ENCODE measurements at regions of chr9 and their contacts with region 1.

Region 1: GRCh38 chr9:98118640-98119601 is at the start of gene TRIM14:
- DNase-seq: no peak
- ATAC-seq: peak; percentile 78
- H3K4me3 ChIP-seq: peak within 1 kb of the TSS; percentile 77
- H3K27ac ChIP-seq: peak within 1 kb of the TSS; percentile 90
- H3K4me1 ChIP-seq: peaks cover 25% of the 10 kb centered on the region
- H3K27me3 ChIP-seq: no peaks in the 10 kb centered on the region
- CTCF ChIP-seq: peak in 2 of 3 experiments; percentile 28 to 44; a peak in 3 of 6 replicates
- EP300 ChIP-seq: no peak
- POLR2A ChIP-seq: peak; percentile 94
- RAD21 ChIP-seq: peak; percentile 47
- polyA plus RNA-seq, gene TRIM14: 8.6 to 10.2 TPM

Region 2: DNA sequence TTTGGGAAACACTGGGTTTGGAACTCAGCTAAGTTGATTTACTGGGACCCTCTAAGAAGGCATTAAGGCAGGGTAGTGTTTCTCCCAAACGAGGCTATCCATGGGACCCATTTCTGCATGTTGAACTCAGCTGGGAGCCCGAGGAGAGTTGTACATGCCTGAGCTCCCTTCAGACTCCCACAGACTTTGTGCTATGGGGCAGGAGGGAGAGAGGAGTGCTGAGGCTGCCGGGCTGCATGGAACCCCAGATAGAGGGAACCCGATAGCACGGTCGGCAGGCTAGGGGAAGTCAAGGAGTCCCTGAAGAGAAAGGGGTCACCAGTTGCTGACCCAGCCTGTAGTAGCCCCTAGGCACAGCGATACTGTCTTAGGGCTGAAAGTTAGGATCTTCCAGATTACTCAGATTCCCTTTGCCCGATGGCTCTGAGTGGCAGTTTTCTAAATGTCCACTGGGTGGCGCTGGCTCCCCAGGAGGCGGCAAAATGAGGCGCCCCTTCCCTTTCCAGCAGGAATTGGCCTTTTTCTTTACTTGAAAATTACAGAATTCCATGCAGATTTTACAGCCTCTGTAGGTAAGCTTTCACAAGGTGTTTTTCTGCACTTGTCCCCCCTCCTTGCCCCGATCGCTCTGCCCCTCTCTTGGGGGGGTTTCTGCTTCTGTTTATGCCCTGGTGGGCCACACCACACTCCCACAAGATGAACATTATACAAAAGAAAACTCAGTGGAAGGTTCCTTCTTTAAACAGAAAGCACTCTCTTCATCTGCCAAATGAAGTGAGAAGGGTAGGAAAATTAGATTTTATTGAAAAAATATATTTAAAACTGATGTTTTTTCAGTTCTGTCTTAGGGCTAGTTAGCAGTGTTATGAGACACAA is 44.6 kb before region 1 on chr9:
- CTCF ChIA-PET with region 1: interaction called, 18 read pairs
- POLR2A ChIA-PET with region 1: no interaction called
- RAD21 ChIA-PET with region 1: interaction called, 7 read pairs
- SMC1A ChIA-PET with region 1: interaction called, 8 read pairs
- in situ Hi-C with region 1: no loop called
- intact Hi-C with region 1: loop called (anchors 2 kb)
- DNase-seq: no peak
- ATAC-seq: peak; percentile 81
- H3K4me3 ChIP-seq: no peak overlapping the region
- H3K27ac ChIP-seq: no peak overlapping the region
- H3K4me1 ChIP-seq: no peaks in the 10 kb centered on the region
- H3K27me3 ChIP-seq: no peaks in the 10 kb centered on the region
- CTCF ChIP-seq: peak; percentile 85 to 95 (median 94)
- EP300 ChIP-seq: no peak
- POLR2A ChIP-seq: no peak
- RAD21 ChIP-seq: peak; percentile 90

Region 3: DNA sequence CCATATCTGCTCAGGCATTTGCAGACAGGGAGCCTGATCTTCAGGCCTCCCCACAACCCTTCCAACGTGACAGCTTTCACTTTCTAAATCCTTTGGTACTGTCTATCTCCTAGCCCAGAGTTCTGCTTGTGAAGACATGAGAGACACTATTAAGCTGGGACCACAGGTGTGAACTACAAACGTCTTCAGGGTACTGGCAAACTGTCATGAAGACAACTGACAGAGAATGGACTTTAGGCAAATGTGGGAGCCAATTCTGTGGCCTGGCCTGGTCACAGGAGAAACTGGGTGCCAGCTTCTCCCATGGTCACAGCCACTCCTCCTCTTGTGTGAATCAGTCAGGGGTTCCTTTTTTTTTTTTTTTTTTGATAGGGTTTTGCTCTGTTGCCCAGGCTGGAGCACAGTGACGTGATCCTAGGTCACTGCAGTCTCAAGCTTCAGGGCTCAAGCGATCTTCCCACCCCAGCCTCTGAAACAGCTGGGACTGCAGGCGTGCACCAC is 10.3 kb before region 1 on chr9:
- CTCF ChIA-PET with region 1: interaction called, 27 read pairs
- POLR2A ChIA-PET with region 1: interaction called, 17 read pairs
- RAD21 ChIA-PET with region 1: interaction called, 25 read pairs
- SMC1A ChIA-PET with region 1: interaction called, 26 read pairs
- in situ Hi-C with region 1: no loop called
- intact Hi-C with region 1: loop called (anchors 2 kb)
- DNase-seq: peak; percentile 80
- ATAC-seq: peak; percentile 81
- H3K4me3 ChIP-seq: peak overlapping the region; percentile 19; the same call in 1 of the 2 replicates
- H3K27ac ChIP-seq: peak overlapping the region; percentile 91
- H3K4me1 ChIP-seq: peaks cover 62% of the 10 kb centered on the region
- H3K27me3 ChIP-seq: no peaks in the 10 kb centered on the region
- CTCF ChIP-seq: no peak
- EP300 ChIP-seq: peak in 1 of 2 experiments; percentile 23; a peak in 1 of 4 replicates
- POLR2A ChIP-seq: no peak
- RAD21 ChIP-seq: no peak

Region 4: GRCh38 chr9:98192503-98193335 is 73.8 kb after region 1 on chr9 and contains the start of gene CORO2A:
- CTCF ChIA-PET with region 1: interaction called, 5 read pairs
- POLR2A ChIA-PET with region 1: interaction called, 3 read pairs
- RAD21 ChIA-PET with region 1: interaction called, 8 read pairs
- SMC1A ChIA-PET with region 1: interaction called, 4 read pairs
- in situ Hi-C with region 1: no loop called
- intact Hi-C with region 1: loop called (anchors 5 kb)
- DNase-seq: no peak
- ATAC-seq: peak; percentile 87
- H3K4me3 ChIP-seq: peak within 1 kb of the TSS; percentile 78
- H3K27ac ChIP-seq: no peak within 1 kb of the TSS
- H3K4me1 ChIP-seq: peaks cover 6% of the 10 kb centered on the region
- H3K27me3 ChIP-seq: peaks cover 0 to 3% of the 10 kb centered on the region in 2 experiments; a peak in 3 of 4 replicates
- CTCF ChIP-seq: peak; percentile 40 to 43 (median 42)
- EP300 ChIP-seq: no peak
- POLR2A ChIP-seq: peak; percentile 69
- RAD21 ChIP-seq: 0 out of 2 replicates have a peak, but pooled peaks have one; percentile 21
- polyA plus RNA-seq, gene CORO2A: 1.7 to 1.9 TPM

Region 5: GRCh38 chr9:98255578-98256296 is 136.8 kb after region 1 on chr9 and contains the start of gene TBC1D2:
- CTCF ChIA-PET with region 1: interaction called, 49 read pairs
- POLR2A ChIA-PET with region 1: interaction called, 9 read pairs
- RAD21 ChIA-PET with region 1: interaction called, 21 read pairs
- SMC1A ChIA-PET with region 1: interaction called, 26 read pairs
- in situ Hi-C with region 1: no loop called
- intact Hi-C with region 1: no loop called
- DNase-seq: peak; percentile 85
- ATAC-seq: peak; percentile 94
- H3K4me3 ChIP-seq: peak within 1 kb of the TSS; percentile 75
- H3K27ac ChIP-seq: peak within 1 kb of the TSS; percentile 93
- H3K4me1 ChIP-seq: peaks cover 4% of the 10 kb centered on the region
- H3K27me3 ChIP-seq: no peaks in the 10 kb centered on the region
- CTCF ChIP-seq: peak; percentile 15 to 28 (median 21); a peak in 2 of 6 replicates
- EP300 ChIP-seq: no peak
- POLR2A ChIP-seq: peak; percentile 92
- RAD21 ChIP-seq: no peak
- polyA plus RNA-seq, gene TBC1D2: 0.04 to 0.06 TPM

Measured in GM12878 (cell line).